ENCODE measurements at regions of chr9 and their contacts with region 1.

Region 1: DNA sequence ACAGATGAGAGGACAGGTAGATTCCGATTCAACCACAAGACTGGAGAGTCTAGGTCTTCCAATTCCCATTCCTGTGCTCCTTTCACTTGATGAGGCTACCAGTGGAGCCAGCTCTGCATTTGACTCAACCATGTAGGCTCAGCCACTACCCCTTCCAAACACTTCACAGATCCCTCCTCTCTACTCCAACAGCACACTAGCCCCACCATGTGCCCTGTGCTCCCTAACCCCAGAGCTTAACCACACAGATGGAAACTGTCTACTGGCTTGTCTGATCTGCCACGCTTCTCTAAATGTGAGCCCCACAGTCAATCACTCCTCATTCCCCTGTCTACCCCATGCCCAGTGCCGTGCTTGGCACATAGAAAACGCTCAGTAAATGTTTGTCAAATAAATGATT is 508.2 kb downstream of the CDK5RAP2 start:
- DNase-seq: no peak
- ATAC-seq: peak; percentile 93
- H3K4me3 Mint-ChIP-seq: no peak overlapping the region
- H3K27ac Mint-ChIP-seq: no peak overlapping the region
- H3K4me1 Mint-ChIP-seq: peaks cover 3% of the 10 kb centered on the region; the same call in 1 of the 2 replicates
- H3K27me3 Mint-ChIP-seq: no peaks in the 10 kb centered on the region
- CTCF ChIP-seq: no peak

Region 2: GRCh38 chr9:120109242-120109641 is 37.5 kb after region 1 on chr9:
- CTCF ChIA-PET with region 1: interaction called, 10 read pairs
- POLR2A ChIA-PET with region 1: no interaction called
- DNase-seq: peak; percentile 78
- ATAC-seq: peak; percentile 100
- H3K4me3 Mint-ChIP-seq: no peak overlapping the region
- H3K27ac Mint-ChIP-seq: no peak overlapping the region
- H3K4me1 Mint-ChIP-seq: peaks cover 9% of the 10 kb centered on the region
- H3K27me3 Mint-ChIP-seq: no peaks in the 10 kb centered on the region
- CTCF ChIP-seq: 0 out of 2 replicates have a peak, but pooled peaks have one; percentile 24

Region 3: DNA sequence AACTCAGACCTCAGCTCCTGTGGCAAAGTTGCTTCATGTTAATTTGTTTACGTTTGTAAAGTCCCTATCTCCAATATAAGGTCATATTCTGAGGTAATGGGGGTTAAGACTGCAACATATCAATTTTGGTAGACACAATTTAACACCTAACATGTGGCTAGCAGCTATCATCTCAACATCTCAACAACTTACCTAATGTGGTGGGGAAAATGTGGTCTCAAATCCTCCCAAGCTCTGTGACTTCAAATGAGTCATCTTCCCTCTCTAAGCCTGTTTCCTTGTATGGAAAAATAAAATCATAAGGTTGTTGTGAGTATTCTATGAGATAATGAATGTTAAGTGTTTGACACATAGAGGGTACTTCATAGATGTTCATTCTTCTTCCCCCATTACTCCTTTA is 64.9 kb after region 1 on chr9:
- CTCF ChIA-PET with region 1: no interaction called
- POLR2A ChIA-PET with region 1: no interaction called
- DNase-seq: no peak
- ATAC-seq: no peak
- H3K4me3 Mint-ChIP-seq: no peak overlapping the region
- H3K27ac Mint-ChIP-seq: no peak overlapping the region
- H3K4me1 Mint-ChIP-seq: no peaks in the 10 kb centered on the region
- H3K27me3 Mint-ChIP-seq: peaks cover 5% of the 10 kb centered on the region
- CTCF ChIP-seq: no peak

Measured in WTC11 (cell line).